Transverse colon (tissue), 4 donors: ENCODE measurements at regions of chr2 and their contacts with region 1.

Region 1: DNA sequence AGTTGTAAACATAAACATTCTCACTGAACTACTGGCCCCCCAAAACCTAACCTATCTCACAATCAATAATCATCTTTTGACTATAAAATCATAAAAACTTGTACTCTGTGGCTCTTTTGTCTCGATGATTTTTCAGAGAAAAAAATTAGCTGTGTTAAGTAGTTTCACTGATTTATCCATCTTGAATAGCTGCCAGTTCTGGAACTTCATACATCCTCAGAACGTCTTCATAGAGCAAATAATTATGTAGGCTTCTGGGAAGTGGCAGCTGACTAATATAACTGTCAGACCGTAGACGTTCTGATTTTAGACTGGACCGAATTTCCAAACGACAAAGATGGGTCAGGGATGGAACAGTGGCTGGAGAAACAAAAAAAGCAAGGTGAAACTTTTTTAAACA is 97.3 kb upstream of the CHAC2 start:
- DNase-seq: no peak
- H3K4me3 ChIP-seq: no peak overlapping the region
- H3K27ac ChIP-seq: no peak overlapping the region
- H3K4me1 ChIP-seq: peaks cover 0 to 5% (median 0%) of the 10 kb centered on the region in 4 donors
- H3K27me3 ChIP-seq: no peaks in the 10 kb centered on the region
- CTCF ChIP-seq: no peak
- EP300 ChIP-seq: no peak
- POLR2A ChIP-seq: no peak

Region 2: GRCh38 chr2:53688020-53688419 is 17.7 kb after region 1 on chr2:
- in situ Hi-C with region 1: no loop called
- intact Hi-C with region 1: loop called (anchors 1 kb)
- DNase-seq: no peak
- H3K4me3 ChIP-seq: no peak overlapping the region
- H3K27ac ChIP-seq: no peak overlapping the region
- H3K4me1 ChIP-seq: no peaks in the 10 kb centered on the region
- H3K27me3 ChIP-seq: no peaks in the 10 kb centered on the region
- CTCF ChIP-seq: no peak
- EP300 ChIP-seq: no peak
- POLR2A ChIP-seq: no peak

Region 3: DNA sequence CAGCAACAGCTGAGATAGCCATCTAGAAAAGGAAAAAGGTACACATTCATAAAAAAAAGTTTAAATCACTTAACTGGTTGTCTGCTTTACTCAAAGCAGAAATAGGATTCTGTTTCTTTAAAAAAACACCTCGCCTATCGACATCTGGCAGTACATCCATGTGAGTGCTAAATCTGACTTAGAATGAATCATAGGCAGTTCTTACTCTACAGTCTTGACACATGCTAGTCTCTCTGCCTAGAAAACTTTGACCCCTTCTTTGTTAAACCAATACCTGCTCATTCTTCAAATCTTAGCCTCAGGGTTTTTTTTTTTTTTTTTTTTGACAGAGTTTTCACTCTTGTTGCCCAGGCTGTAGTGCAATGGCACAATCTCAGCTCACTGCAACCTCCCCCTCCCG is 226.5 kb after region 1 on chr2:
- in situ Hi-C with region 1: no loop called
- intact Hi-C with region 1: no loop called
- DNase-seq: no peak
- H3K4me3 ChIP-seq: no peak overlapping the region
- H3K27ac ChIP-seq: no peak overlapping the region
- H3K4me1 ChIP-seq: no peaks in the 10 kb centered on the region
- H3K27me3 ChIP-seq: no peaks in the 10 kb centered on the region
- CTCF ChIP-seq: no peak
- EP300 ChIP-seq: no peak
- POLR2A ChIP-seq: no peak